ENCODE measurements at regions of chr3 and their contacts with region 1.

Region 1: DNA sequence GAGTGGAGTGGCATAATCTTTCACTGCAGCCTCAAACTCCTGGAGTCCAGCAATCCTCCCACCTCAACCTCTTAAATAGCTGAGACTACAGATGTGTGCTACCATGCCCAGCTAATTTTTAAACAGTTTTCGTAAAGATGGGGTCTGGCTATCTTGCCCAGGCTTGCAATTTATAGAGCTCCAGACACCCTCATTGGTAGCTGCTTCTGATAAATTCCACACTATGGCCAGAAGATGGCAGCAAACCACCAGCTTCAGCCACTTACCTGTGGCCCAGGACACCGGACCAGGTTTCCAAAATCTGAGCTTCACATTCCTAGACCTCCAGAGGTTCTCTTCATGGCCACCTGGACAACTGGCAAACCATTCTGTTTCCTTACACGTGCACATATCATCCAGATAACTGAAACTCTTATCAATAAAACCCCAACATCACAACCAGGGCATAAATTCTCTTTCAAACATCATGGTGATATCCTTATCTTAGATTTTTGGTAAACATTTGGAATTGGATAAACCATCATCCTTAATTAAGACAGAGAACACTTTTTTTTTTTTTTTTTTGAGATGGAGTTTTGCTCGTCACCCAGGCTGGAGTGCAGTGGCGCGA is 28.9 kb downstream of the FBXW12 start:
- DNase-seq: peak; percentile 21 to 51
- H3K4me3 ChIP-seq: no peak overlapping the region
- H3K27ac ChIP-seq: no peak overlapping the region
- H3K4me1 ChIP-seq: peaks cover 0 to 7% (median 4%) of the 10 kb centered on the region in 4 experiments; a peak in 3 of 7 replicates
- H3K27me3 ChIP-seq: no peaks in the 10 kb centered on the region
- CTCF ChIP-seq: peak in 2 of 3 experiments; percentile 87 to 93; a peak in 3 of 4 replicates
- EP300 ChIP-seq: no peak
- POLR2A ChIP-seq: no peak
- RAD21 ChIP-seq: peak; percentile 88 to 91

Region 2: DNA sequence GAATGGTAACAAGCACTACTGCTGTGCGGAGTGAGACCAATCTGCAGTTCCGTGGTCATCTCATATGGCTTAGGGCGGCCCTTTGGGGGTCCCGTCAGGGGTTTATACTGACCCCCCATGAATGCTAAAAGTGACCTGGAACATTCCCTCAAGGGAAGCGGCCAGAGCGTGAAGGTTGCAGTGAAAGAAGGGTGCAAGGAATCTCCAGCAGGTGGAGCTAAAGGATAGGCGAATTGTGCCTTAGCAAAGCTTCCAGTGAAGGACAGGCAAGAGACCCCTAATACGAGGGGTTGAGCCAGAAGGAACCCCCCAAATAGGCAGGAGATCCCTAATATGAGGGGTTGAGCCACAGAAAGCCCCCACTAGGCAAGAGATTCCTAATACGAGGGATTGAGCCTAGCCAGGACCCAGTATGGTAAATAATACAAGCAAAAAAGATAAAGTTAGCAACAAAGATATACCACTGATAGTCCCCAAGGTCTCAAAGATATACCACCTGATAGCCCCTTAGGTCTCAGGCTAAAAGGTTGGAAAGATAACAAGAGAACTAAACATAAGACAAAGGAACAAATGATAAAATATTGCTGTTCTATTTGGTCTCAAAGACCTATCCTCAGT is 127.2 kb before region 1 on chr3:
- CTCF ChIA-PET with region 1: interaction called, 44 read pairs
- POLR2A ChIA-PET with region 1: interaction called, 16 read pairs
- DNase-seq: peak; percentile 39 to 73
- H3K4me3 ChIP-seq: no peak overlapping the region
- H3K27ac ChIP-seq: no peak overlapping the region
- H3K4me1 ChIP-seq: peaks cover 0 to 26% (median 18%) of the 10 kb centered on the region in 4 experiments; a peak in 5 of 7 replicates
- H3K27me3 ChIP-seq: no peaks in the 10 kb centered on the region
- CTCF ChIP-seq: peak; percentile 63 to 81 (median 77)
- EP300 ChIP-seq: no peak
- POLR2A ChIP-seq: no peak; a peak in 1 of 3 replicates
- RAD21 ChIP-seq: peak; percentile 88 to 91

Region 3: DNA sequence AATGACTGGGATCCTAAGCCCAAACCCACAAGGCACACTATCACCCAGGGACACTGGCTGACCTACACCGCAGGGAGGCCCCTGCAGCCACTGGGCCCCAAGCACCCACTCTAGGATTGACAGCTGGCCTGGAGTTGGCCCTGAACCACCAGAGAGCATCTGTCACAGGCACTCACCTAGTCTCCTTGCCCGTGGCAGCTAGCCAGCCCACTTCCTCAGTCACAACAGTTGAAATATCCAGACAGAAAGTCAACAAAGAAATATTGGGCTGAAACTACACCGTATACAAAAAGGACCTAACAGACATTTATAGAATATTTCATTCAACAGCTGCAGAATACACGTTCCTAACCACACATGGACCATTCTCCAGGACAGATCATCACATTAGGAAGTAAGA is 62.3 kb before region 1 on chr3:
- CTCF ChIA-PET with region 1: no interaction called
- POLR2A ChIA-PET with region 1: no interaction called
- DNase-seq: no peak
- H3K4me3 ChIP-seq: no peak overlapping the region
- H3K27ac ChIP-seq: no peak overlapping the region
- H3K4me1 ChIP-seq: no peaks in the 10 kb centered on the region
- H3K27me3 ChIP-seq: no peaks in the 10 kb centered on the region; a peak in 1 of 7 replicates
- CTCF ChIP-seq: no peak
- EP300 ChIP-seq: no peak
- POLR2A ChIP-seq: no peak
- RAD21 ChIP-seq: no peak

Region 4: GRCh38 chr3:48388966-48389365 is 12.0 kb before region 1 on chr3:
- CTCF ChIA-PET with region 1: interaction called, 21 read pairs
- POLR2A ChIA-PET with region 1: interaction called, 9 read pairs
- DNase-seq: no peak
- H3K4me3 ChIP-seq: no peak overlapping the region
- H3K27ac ChIP-seq: no peak overlapping the region
- H3K4me1 ChIP-seq: no peaks in the 10 kb centered on the region
- H3K27me3 ChIP-seq: no peaks in the 10 kb centered on the region
- CTCF ChIP-seq: no peak
- EP300 ChIP-seq: no peak
- POLR2A ChIP-seq: no peak
- RAD21 ChIP-seq: no peak

Region 5: GRCh38 chr3:48429317-48429959 is 28.5 kb after region 1 on chr3:
- CTCF ChIA-PET with region 1: interaction called, 220 read pairs
- POLR2A ChIA-PET with region 1: interaction called, 650 read pairs
- DNase-seq: peak in 1 of 2 experiments; percentile 90
- H3K4me3 ChIP-seq: peak overlapping the region; percentile 66 to 85 (median 76)
- H3K27ac ChIP-seq: peak overlapping the region; percentile 94
- H3K4me1 ChIP-seq: peaks cover 7 to 37% (median 22%) of the 10 kb centered on the region in 4 experiments
- H3K27me3 ChIP-seq: no peaks in the 10 kb centered on the region
- CTCF ChIP-seq: no peak
- EP300 ChIP-seq: no peak
- POLR2A ChIP-seq: peak in 1 of 2 experiments; percentile 55; a peak in 2 of 3 replicates
- RAD21 ChIP-seq: no peak

Region 6: DNA sequence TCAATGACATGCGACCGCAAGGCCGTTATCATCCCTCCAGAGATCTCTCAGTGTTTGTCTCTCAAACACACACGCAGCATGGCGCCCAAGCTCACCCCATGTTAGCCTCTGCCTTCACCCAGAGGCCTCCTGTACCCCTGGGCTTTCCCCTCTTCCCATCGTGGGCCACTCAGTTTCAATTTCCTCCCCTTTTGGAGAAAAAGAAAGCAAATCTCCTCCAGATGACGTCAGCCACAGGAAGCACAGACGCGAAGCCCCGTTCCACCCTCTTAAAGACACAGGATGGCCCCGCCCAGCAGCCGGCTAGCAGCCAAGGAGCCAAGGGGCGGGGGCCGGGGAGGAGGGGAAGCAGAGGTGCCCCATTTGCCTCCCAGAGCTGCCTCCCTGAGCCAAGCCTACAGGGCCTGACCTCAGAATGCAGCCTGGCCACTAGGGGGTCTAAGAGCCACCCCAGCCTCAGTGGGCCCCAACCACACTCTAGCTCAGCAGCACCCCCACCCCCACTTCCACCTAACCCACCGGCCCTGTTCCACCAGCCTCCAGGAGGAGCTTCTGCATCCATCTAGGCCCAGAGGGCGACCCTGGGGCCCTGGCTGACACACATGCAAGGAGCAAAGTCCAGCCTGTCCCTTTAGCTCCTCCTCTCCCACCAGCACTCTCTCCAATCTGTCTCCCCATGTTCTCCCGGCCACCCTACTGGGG is 72.1 kb after region 1 on chr3:
- CTCF ChIA-PET with region 1: interaction called, 13 read pairs
- POLR2A ChIA-PET with region 1: interaction called, 4 read pairs
- DNase-seq: peak; percentile 89 to 94
- H3K4me3 ChIP-seq: peak overlapping the region; percentile 54 to 79 (median 69)
- H3K27ac ChIP-seq: peak overlapping the region; percentile 97
- H3K4me1 ChIP-seq: peaks cover 0 to 28% (median 19%) of the 10 kb centered on the region in 4 experiments; a peak in 6 of 7 replicates
- H3K27me3 ChIP-seq: no peaks in the 10 kb centered on the region
- CTCF ChIP-seq: peak in 2 of 3 experiments; percentile 56 to 65; a peak in 3 of 4 replicates
- EP300 ChIP-seq: no peak
- POLR2A ChIP-seq: peak in 1 of 2 experiments; percentile 87; a peak in 1 of 3 replicates
- RAD21 ChIP-seq: peak; percentile 27 to 43; a peak in 3 of 4 replicates

Region 7: GRCh38 chr3:48663415-48664312 is 262.7 kb after region 1 on chr3:
- CTCF ChIA-PET with region 1: no interaction called
- POLR2A ChIA-PET with region 1: no interaction called
- DNase-seq: peak; percentile 99
- H3K4me3 ChIP-seq: peak overlapping the region; percentile 73 to 84 (median 82)
- H3K27ac ChIP-seq: peak overlapping the region; percentile 97
- H3K4me1 ChIP-seq: peaks cover 0 to 11% (median 7%) of the 10 kb centered on the region in 4 experiments; a peak in 5 of 7 replicates
- H3K27me3 ChIP-seq: 0 out of 7 replicates have a peak, but pooled peaks cover 0 to 4% (median 0%) of the 10 kb centered on the region in 4 experiments
- CTCF ChIP-seq: peak in 2 of 3 experiments; percentile 67 to 91; a peak in 3 of 4 replicates
- EP300 ChIP-seq: peak in 1 of 2 experiments; percentile 85; a peak in 1 of 3 replicates
- POLR2A ChIP-seq: peak in 1 of 2 experiments; percentile 68; a peak in 2 of 3 replicates
- RAD21 ChIP-seq: 0 out of 4 replicates have a peak, but pooled peaks have one; percentile 10 to 13